PC-9 (cell line): ENCODE measurements at regions of chr1 and their contacts with region 1.

Region 1: GRCh38 chr1:155227261-155228095 is 19.0 kb downstream of the MTX1 start:
- DNase-seq: peak; percentile 93 to 97
- H3K4me3 ChIP-seq: peak overlapping the region; percentile 81
- H3K27ac ChIP-seq: peak overlapping the region; percentile 98
- H3K4me1 ChIP-seq: peaks cover 41% of the 10 kb centered on the region
- H3K27me3 ChIP-seq: no peaks in the 10 kb centered on the region
- CTCF ChIP-seq: no peak; the same call in 1 of the 2 replicates

Region 2: GRCh38 chr1:155106850-155107249 is 120.6 kb before region 1 on chr1:
- CTCF ChIA-PET with region 1: no interaction called
- POLR2A ChIA-PET with region 1: interaction called, 10 read pairs
- intact Hi-C with region 1: no loop called
- DNase-seq: no peak
- H3K4me3 ChIP-seq: no peak overlapping the region
- H3K27ac ChIP-seq: no peak overlapping the region
- H3K4me1 ChIP-seq: no peaks in the 10 kb centered on the region
- H3K27me3 ChIP-seq: no peaks in the 10 kb centered on the region
- CTCF ChIP-seq: no peak

Region 3: GRCh38 chr1:155172732-155173477 is 54.6 kb before region 1 on chr1 and contains the start of gene KRTCAP2:
- CTCF ChIA-PET with region 1: interaction called, 13 read pairs
- POLR2A ChIA-PET with region 1: interaction called, 3 read pairs
- intact Hi-C with region 1: loop called (anchors 1 kb)
- DNase-seq: peak; percentile 89 to 93
- H3K4me3 ChIP-seq: peak within 1 kb of the TSS; percentile 89
- H3K27ac ChIP-seq: peak within 1 kb of the TSS; percentile 59
- H3K4me1 ChIP-seq: peaks cover 30% of the 10 kb centered on the region
- H3K27me3 ChIP-seq: no peaks in the 10 kb centered on the region
- CTCF ChIP-seq: peak; percentile 94
- total RNA-seq, gene KRTCAP2: 112 and 156 TPM in 2 replicates

Region 4: DNA sequence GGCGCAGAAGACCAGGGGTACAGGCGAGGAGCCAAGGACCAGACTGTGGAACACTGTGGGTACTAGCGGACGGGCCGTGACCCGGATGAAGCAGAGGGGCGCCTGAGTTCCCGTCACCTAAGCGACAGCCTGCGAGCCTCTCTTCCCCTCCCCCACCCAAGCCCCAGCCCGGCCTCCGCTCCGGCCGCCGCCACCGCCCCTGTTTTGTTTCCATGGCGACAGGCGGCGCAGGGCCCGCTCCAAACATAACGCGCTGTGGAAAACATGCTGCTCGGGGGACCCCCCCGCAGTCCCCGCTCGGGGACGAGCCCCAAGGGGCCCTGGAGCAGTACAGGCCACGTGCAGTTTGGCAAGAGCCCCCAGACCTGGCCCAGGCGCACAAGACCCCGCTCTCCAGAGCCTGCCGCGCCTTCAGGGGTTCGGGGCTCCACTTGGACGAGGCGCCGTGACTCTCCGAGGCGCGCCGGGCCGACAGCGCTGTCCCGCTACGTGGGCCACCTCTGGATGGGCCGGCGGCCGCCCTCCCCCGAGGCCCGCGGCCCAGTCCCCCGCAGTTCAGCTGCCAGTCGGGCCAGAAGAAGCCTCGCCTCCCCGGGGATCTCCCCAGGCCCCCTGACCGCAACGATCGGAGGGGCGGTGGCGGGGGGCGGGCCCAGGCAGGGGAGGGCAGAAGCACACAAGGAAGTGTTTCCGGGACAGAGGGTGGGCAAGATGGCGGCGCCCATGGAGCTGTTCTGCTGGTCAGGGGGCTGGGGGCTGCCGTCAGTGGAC is 18.8 kb before region 1 on chr1 and contains the start of gene MTX1:
- CTCF ChIA-PET with region 1: interaction called, 9 read pairs
- POLR2A ChIA-PET with region 1: interaction called, 7 read pairs
- intact Hi-C with region 1: loop called (anchors 1 kb)
- DNase-seq: peak; percentile 60 to 85
- H3K4me3 ChIP-seq: peak within 1 kb of the TSS; percentile 78
- H3K27ac ChIP-seq: peak within 1 kb of the TSS; percentile 74
- H3K4me1 ChIP-seq: peaks cover 26% of the 10 kb centered on the region
- H3K27me3 ChIP-seq: no peaks in the 10 kb centered on the region
- CTCF ChIP-seq: no peak
- total RNA-seq, gene MTX1: 56.1 and 68.9 TPM in 2 replicates

Region 5: DNA sequence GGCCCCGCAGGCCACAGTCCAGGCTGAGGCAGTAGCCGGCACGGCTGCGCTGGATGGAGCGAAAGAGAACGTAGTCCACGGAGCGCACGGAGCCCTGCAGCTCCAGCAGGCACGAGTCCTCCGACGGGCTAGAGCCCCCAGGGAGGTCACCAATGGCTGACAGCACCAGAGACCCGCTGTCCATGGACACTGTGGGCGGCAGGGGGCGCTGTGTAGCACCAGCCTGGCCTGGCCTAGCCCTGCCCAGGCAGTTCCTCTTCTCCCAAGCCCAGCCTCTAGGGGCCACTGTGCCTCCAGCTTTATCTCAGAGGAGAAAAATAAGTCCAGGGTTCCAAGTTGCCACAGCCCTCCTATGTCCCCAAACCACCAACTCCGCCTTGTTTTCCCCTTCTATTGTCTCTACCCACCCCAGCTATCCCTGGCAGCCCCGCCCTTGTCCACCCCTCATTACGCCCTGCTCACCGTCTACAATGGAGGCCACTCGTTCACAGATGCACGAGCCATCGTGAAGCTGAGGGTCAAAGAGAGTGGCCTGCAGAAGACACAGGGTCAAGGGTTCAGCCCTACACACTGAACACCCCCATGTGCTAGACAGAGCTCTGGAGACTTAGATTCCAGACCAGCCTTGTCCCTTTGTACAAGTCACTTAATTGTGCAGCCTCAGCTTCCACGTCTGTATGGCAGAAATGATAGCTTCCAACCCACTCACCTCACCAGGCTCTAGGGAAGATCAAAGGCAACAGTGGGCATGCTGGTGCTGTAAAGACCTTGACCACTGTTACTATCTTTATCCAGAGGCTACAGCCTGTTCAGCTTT is 23.4 kb after region 1 on chr1:
- CTCF ChIA-PET with region 1: interaction called, 12 read pairs
- POLR2A ChIA-PET with region 1: interaction called, 10 read pairs
- intact Hi-C with region 1: no loop called
- DNase-seq: peak; percentile 70 to 88
- H3K4me3 ChIP-seq: no peak overlapping the region
- H3K27ac ChIP-seq: no peak overlapping the region
- H3K4me1 ChIP-seq: peaks cover 13% of the 10 kb centered on the region
- H3K27me3 ChIP-seq: no peaks in the 10 kb centered on the region
- CTCF ChIP-seq: peak; percentile 96